Gastrocnemius medialis (tissue), 4 donors: ENCODE measurements at regions of chr3 and their contacts with region 1.

Region 1: GRCh38 chr3:4466741-4467521 is at the start of gene SUMF1:
- DNase-seq: peak; percentile 53 to 70
- ATAC-seq: peak; percentile 98 to 99
- H3K4me3 ChIP-seq: peak within 1 kb of the TSS; percentile 82 to 93 (median 90)
- H3K27ac ChIP-seq: peak within 1 kb of the TSS; percentile 77 to 84 (median 84)
- H3K4me1 ChIP-seq: peaks cover 8 to 11% of the 10 kb centered on the region in 2 donors
- H3K27me3 ChIP-seq: no peaks in the 10 kb centered on the region
- CTCF ChIP-seq: no peak
- POLR2A ChIP-seq: peak; percentile 41 to 46
- total RNA-seq, gene SUMF1: 4.4 to 9.4 (median 7.6) TPM

Region 2: DNA sequence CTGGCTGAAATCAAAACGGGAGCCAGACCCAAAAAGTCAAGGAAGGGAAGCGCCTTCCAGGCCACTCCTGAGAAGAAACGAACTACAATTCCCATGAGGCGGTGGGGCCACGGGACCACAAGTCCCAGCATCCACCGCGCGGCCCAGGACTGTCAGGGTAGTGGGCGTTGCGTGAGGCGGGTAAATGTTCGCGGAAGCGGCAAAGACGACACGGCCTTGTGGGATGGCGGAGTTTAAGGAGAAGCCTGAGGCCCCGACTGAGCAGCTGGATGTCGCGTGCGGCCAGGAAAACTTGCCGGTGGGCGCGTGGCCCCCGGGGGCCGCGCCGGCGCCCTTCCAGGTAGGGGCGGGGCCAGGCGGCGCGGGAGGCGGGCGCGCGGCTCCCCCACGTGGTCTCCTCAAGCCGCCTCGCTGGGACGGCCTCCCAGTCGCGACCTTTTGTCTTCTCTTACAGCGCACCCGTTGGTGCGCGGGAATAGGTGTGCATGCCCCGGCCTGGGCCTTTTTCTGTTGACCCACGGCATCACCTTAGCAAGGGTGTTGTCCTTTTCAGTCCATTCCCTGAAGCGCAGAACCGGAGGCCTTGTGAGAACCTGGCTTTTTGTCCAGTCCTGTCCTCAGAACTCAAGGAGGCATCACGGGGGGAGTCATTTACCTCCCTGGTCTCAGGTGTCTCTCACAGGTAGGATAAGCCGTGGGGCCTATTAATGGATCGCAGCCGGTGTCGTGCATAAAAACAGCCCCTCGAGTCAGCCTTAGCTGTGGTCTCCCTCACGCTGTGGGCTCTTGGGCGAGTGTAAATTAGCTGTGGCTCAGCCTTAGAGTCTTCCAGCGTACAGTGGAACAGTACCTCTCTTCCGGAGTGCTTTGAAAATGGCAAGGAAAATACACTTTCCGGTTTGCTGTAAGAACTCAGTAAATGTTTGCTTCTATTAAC is 163.5 kb before region 1 on chr3 and contains the start of gene SETMAR:
- in situ Hi-C with region 1: no loop called
- intact Hi-C with region 1: loop called (anchors 10 kb)
- DNase-seq: peak; percentile 85 to 88
- ATAC-seq: peak; percentile 96 to 97
- H3K4me3 ChIP-seq: peak within 1 kb of the TSS; percentile 68 to 84 (median 78)
- H3K27ac ChIP-seq: peak within 1 kb of the TSS; percentile 87 to 95 (median 90)
- H3K4me1 ChIP-seq: peaks cover 32 to 38% of the 10 kb centered on the region in 2 donors
- H3K27me3 ChIP-seq: no peaks in the 10 kb centered on the region
- CTCF ChIP-seq: no peak
- POLR2A ChIP-seq: peak; percentile 61 to 71
- total RNA-seq, gene SETMAR: 3.7 to 10.4 (median 7.6) TPM